Tibial artery (tissue), 4 donors: ENCODE measurements at regions of chr4 and their contacts with region 1.

Region 1: GRCh38 chr4:173223743-173224142 is 55.1 kb downstream of the GALNT7 start:
- DNase-seq: no peak
- H3K4me3 ChIP-seq: no peak overlapping the region
- H3K27ac ChIP-seq: no peak overlapping the region
- H3K4me1 ChIP-seq: peaks cover 0 to 4% (median 0%) of the 10 kb centered on the region in 4 donors
- H3K27me3 ChIP-seq: no peaks in the 10 kb centered on the region
- CTCF ChIP-seq: no peak

Region 2: DNA sequence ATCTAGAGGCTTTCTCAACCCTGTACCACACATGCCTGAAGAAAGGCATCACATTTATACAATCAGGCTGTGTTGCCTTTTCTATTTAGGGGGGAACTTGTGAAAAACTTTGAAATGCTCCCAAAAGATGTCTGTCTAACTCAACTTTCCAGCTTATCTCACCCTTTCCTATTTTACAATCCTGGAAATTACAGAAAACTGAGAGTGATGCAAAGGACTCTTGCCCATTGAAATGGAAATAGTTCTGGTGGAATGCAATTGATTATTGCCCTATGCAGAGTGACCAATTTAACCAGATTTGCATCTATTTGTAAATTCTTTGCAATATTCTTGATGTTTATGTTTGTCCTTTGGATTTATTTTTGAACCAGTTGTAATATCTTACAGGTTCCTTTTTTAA is 22.2 kb after region 1 on chr4:
- intact Hi-C with region 1: loop called (anchors 1 kb)
- DNase-seq: no peak
- H3K4me3 ChIP-seq: no peak overlapping the region
- H3K27ac ChIP-seq: no peak overlapping the region
- H3K4me1 ChIP-seq: no peaks in the 10 kb centered on the region
- H3K27me3 ChIP-seq: no peaks in the 10 kb centered on the region
- CTCF ChIP-seq: no peak

Region 3: GRCh38 chr4:173257732-173258717 is 34.3 kb after region 1 on chr4:
- intact Hi-C with region 1: no loop called
- DNase-seq: peak; percentile 48 to 72
- H3K4me3 ChIP-seq: no peak overlapping the region
- H3K27ac ChIP-seq: no peak overlapping the region
- H3K4me1 ChIP-seq: no peaks in the 10 kb centered on the region
- H3K27me3 ChIP-seq: no peaks in the 10 kb centered on the region
- CTCF ChIP-seq: peak; percentile 63 to 69